Mammary epithelial cell (primary cell): ENCODE measurements at regions of chr19 and their contacts with region 1.

Region 1: DNA sequence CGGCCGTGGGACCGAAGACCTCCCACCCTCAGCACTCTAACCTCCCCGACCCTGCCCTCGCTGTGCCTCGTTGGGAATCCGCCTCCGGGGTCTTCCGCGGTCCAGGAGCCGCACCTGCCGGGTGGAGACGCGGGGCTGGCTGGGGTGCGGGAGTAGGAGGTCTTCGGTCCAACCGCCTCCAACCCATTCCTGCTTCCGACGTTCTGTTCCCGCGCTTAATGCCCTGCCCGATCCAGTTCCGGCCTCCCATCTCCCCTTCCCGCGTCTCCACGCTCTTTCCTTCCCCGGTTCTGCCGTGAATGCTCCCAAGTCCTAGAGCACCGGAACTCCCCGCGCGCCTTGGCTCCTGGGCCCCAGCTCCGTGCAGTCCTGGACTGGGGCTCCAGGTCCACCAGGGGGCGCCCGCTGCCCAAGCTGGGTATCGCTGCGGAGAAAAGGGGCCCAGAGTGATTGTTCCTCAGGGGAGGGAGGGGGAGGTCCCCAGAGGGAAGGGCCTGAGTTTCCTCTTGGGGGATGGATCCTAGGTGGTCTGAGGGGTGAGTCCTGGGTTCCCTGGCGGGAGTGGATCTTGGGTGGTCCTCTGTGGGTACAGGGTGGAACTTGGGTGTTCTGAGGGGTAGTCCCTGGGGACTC is 14.1 kb upstream of the TNFSF9 start:
- DNase-seq: peak; percentile 78
- H3K4me3 ChIP-seq: peak overlapping the region; percentile 52 to 83 (median 67)
- H3K27ac ChIP-seq: peak overlapping the region; percentile 43
- H3K4me1 ChIP-seq: peaks cover 13% of the 10 kb centered on the region
- H3K27me3 ChIP-seq: no peaks in the 10 kb centered on the region
- CTCF ChIP-seq: peak; percentile 87 to 98

Region 2: GRCh38 chr19:6481541-6482342 is 35.0 kb before region 1 on chr19 and contains the start of gene DENND1C:
- CTCF ChIA-PET with region 1: no interaction called
- dilution Hi-C with region 1: no loop called
- in situ Hi-C with region 1: no loop called
- intact Hi-C with region 1: no loop called
- DNase-seq: no peak
- H3K4me3 ChIP-seq: no peak within 1 kb of the TSS
- H3K27ac ChIP-seq: no peak within 1 kb of the TSS
- H3K4me1 ChIP-seq: peaks cover 1% of the 10 kb centered on the region
- H3K27me3 ChIP-seq: no peaks in the 10 kb centered on the region
- CTCF ChIP-seq: peak; percentile 33 to 36
- total RNA-seq, gene DENND1C: 0.33 TPM in 1 of 2 donors, not detected in the other

Region 3: DNA sequence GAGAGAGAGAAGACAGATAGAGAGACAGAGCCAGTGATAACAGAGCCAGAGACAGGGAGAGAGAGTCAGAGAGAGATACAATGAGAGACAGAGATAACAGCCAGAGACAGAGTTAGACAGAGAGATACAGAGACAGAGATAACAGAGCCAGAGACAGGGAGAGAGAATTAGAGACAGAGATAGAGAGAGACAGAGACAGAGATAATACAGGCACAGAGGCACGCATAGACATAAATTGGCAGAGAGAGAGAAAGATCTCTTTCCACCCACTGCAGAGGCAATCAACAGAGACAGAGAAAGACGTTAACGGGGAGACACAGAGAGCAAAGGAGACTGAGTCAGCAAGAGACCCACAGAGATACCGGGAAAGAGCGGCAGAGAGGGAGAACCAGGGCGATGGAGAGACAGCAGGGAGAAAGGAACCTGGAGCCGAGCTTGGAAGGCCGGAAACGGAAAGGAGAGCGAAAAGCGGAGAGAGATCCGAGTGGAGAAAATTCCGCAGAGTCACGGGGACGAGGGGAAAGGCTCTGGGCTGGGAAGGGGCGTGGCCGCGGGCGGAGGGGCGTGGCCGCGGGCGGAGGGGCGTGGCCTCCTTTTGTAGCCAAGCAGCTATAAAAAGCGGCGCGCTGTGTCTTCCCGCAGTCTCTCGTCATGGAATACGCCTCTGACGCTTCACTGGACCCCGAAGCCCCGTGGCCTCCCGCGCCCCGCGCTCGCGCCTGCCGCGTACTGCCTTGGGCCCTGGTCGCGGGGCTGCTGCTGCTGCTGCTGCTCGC is 13.8 kb after region 1 on chr19 and contains the start of gene TNFSF9:
- CTCF ChIA-PET with region 1: interaction called, 21 read pairs
- dilution Hi-C with region 1: no loop called
- in situ Hi-C with region 1: no loop called
- intact Hi-C with region 1: loop called (anchors 1 kb)
- DNase-seq: peak; percentile 87
- H3K4me3 ChIP-seq: peak within 1 kb of the TSS; percentile 63 to 88 (median 77)
- H3K27ac ChIP-seq: peak within 1 kb of the TSS; percentile 90
- H3K4me1 ChIP-seq: peaks cover 11% of the 10 kb centered on the region
- H3K27me3 ChIP-seq: no peaks in the 10 kb centered on the region
- CTCF ChIP-seq: no peak
- total RNA-seq, gene TNFSF9: 9.5 to 15.2 TPM

Region 4: DNA sequence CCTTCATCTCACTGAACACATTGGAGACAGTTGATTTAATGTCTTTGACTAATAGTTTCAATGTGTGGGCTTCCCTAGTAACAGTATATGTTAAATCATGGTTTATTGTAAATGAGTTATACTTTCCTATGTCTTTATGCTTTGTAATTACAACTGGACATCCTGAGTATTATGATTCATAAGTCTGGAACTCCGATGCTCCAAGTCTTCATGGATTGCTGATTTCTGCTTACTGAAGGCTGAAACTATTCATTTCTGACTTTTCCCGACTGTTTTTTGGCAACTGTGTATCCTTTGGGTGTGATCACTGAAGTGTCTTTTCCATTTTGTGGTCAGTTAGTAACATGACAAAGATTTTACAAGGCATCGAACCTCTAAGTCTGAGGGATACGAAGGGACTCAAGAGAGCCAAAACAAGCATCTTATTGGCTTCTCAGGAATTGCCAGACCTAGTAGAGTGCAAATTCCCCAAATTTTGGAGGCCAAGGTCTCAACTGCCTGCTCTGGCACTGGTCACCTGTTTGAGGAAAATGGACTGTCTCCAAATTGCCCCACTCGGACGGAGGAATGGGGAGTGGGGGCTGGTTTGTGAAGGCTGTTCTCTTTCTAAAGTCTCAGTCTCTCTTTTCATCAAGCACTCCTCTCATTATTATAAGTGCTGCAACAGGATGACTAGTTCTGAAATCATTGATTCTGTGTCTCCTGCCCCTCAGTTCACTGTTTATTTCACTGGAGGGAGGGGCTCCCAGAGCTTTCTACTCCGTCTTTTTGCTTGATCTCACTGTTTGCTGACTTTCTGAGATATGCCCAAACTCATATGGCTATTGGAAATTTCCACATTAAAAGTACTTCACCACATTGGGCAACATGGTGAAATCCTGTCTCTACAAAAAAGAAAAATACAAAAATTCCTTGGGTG is 94.4 kb after region 1 on chr19:
- CTCF ChIA-PET with region 1: interaction called, 3 read pairs
- dilution Hi-C with region 1: loop called (anchors 5 kb)
- in situ Hi-C with region 1: no loop called
- intact Hi-C with region 1: loop called (anchors 1 kb)
- DNase-seq: peak; percentile 90
- H3K4me3 ChIP-seq: peak overlapping the region in 2 of 3 experiments; percentile 0 to 12
- H3K27ac ChIP-seq: peak overlapping the region; percentile 85
- H3K4me1 ChIP-seq: peaks cover 22% of the 10 kb centered on the region
- H3K27me3 ChIP-seq: no peaks in the 10 kb centered on the region
- CTCF ChIP-seq: no peak

Region 5: GRCh38 chr19:6737284-6738046 is 220.7 kb after region 1 on chr19 and contains the start of gene GPR108:
- CTCF ChIA-PET with region 1: no interaction called
- dilution Hi-C with region 1: no loop called
- in situ Hi-C with region 1: loop called in 1 of 2 experiments (anchors 10 kb)
- intact Hi-C with region 1: loop called (anchors 1 kb)
- DNase-seq: peak; percentile 100
- H3K4me3 ChIP-seq: peak within 1 kb of the TSS; percentile 74 to 99 (median 83)
- H3K27ac ChIP-seq: peak within 1 kb of the TSS; percentile 80
- H3K4me1 ChIP-seq: peaks cover 29% of the 10 kb centered on the region
- H3K27me3 ChIP-seq: no peaks in the 10 kb centered on the region
- CTCF ChIP-seq: no peak
- total RNA-seq, gene GPR108: 50.2 to 95.9 TPM

Region 6: DNA sequence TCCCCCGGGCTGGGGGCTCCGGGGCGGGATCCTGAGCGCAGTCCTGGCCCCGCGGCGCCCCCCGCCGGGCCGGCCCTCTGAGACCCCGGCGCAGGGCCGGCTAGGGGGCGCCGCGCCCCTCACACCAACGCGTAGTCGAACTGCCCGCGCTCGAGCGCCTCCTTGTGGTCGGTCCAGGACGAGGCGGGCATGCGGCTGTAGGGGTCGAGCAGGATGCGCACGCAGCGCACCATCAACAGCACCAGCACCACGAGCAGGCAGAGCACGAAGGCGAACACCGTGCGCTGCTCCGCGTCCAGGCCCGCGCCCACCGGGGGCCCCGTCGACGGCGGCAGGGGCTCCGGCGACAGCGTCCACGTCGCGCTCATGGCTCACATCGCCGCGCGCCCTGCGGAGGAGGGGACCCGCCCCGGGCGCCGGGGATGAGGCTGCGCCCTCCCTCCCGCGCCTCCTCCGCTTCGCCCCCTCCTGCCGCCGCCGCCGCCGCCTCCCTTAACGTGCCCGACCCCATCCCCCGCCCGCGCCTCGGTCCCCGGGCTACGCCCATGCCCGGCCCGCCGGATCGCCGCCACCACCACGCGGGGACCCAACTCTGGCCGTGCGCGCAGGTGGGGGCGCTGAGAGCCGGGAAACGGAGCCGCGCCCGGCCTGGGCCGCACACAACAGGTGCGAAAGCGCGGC is 1408.5 kb after region 1 on chr19:
- CTCF ChIA-PET with region 1: no interaction called
- dilution Hi-C with region 1: no loop called
- in situ Hi-C with region 1: no loop called
- intact Hi-C with region 1: no loop called
- DNase-seq: no peak
- H3K4me3 ChIP-seq: peak overlapping the region in 2 of 3 experiments; percentile 37 to 42
- H3K27ac ChIP-seq: no peak overlapping the region
- H3K4me1 ChIP-seq: peaks cover 53% of the 10 kb centered on the region
- H3K27me3 ChIP-seq: no peaks in the 10 kb centered on the region
- CTCF ChIP-seq: peak; percentile 64 to 77